ENCODE measurements at regions of chr17 and their contacts with region 1.

Region 1: DNA sequence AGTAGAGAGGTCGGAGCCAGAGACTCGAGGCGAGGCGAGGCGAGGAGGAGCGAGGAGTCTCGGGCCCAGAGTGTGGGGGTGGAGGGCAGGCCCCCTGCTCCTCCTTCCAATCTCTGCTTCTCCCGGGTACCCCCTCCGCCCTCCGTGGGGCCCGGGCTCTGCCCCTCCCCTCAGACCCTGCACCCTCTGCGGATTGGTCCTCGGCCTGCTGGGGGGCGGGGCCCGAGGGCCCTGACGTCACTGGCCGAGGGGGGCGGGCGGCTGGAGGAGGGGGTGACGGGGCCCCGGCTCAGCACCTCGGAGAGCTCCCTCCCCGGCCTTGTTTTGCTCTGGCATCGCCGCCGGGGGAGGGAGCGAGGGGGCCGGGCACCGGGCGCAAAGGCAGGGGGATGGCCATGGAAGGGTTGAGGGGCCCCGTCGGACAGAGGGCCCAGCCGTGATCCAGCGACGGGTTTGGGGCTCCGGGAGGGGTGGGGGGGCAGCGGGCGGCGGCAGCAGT is at the start of gene RUNDC3A:
- DNase-seq: peak; percentile 87
- H3K4me3 ChIP-seq: peak within 1 kb of the TSS in 1 of 3 donors; percentile 41
- H3K27ac ChIP-seq: peak within 1 kb of the TSS; percentile 36 to 74 (median 47)
- H3K4me1 ChIP-seq: peaks cover 22 to 36% of the 10 kb centered on the region in 2 donors
- H3K27me3 ChIP-seq: no peaks in the 10 kb centered on the region
- CTCF ChIP-seq: no peak
- POLR2A ChIP-seq: no peak
- total RNA-seq, gene RUNDC3A: 0.89 to 4.1 (median 2.1) TPM

Region 2: DNA sequence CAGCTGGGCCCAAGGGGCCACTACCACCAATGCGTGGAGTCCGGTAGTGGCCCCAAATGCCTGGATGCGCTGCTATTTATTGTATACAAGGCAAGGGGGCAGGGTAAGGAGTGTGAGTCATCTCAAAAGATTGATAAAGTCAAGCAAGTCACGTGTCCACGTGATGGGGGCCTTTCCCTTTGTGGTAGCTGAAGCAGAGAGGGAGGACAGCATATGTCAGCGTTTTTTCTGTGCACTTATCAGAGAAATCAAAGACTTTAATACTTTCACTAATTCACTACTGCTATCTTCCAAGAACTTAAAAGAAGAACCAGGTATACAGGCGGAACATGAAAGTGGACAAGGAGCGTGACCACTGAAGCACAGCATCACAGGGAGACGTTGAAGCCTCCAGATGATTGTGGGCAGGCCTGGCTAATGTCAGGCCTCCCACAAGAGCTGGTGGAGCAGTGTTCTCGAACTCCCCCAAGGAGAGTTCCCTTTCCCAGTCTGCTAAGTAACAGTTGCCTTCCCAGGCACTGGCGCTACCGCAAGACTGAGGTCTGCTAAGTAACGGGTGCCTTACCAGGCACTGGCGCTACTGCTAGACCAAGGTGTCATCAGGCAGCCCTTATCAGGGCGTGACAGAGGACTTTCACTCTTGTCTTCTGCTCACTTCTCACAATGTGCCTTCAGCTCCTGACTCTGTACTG is 148.7 kb before region 1 on chr17:
- intact Hi-C with region 1: no loop called
- DNase-seq: no peak
- H3K4me3 ChIP-seq: no peak overlapping the region
- H3K27ac ChIP-seq: no peak overlapping the region
- H3K4me1 ChIP-seq: no peaks in the 10 kb centered on the region
- H3K27me3 ChIP-seq: no peaks in the 10 kb centered on the region
- CTCF ChIP-seq: no peak
- POLR2A ChIP-seq: no peak

Region 3: DNA sequence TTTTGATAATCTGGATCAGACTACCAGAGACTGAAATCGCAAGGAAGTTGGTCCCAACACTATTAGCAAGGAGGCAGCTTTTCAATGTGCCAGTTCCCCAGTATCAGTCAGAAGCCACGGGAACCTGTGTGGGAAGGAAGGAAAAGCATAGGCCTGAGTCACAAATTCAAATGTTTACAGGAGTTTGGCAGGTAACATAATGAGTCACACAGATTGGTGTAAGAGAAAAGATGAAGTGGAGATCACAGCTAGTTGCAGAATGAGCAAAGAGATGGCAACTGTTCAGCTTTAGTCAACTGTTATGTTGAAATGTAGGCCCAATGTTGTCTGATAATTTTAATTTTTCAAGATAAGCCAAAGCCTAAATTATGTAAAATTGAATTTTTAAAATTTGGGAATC is 109.2 kb after region 1 on chr17:
- intact Hi-C with region 1: no loop called
- DNase-seq: no peak
- H3K4me3 ChIP-seq: no peak overlapping the region
- H3K27ac ChIP-seq: no peak overlapping the region
- H3K4me1 ChIP-seq: no peaks in the 10 kb centered on the region
- H3K27me3 ChIP-seq: no peaks in the 10 kb centered on the region
- CTCF ChIP-seq: no peak
- POLR2A ChIP-seq: no peak

Region 4: DNA sequence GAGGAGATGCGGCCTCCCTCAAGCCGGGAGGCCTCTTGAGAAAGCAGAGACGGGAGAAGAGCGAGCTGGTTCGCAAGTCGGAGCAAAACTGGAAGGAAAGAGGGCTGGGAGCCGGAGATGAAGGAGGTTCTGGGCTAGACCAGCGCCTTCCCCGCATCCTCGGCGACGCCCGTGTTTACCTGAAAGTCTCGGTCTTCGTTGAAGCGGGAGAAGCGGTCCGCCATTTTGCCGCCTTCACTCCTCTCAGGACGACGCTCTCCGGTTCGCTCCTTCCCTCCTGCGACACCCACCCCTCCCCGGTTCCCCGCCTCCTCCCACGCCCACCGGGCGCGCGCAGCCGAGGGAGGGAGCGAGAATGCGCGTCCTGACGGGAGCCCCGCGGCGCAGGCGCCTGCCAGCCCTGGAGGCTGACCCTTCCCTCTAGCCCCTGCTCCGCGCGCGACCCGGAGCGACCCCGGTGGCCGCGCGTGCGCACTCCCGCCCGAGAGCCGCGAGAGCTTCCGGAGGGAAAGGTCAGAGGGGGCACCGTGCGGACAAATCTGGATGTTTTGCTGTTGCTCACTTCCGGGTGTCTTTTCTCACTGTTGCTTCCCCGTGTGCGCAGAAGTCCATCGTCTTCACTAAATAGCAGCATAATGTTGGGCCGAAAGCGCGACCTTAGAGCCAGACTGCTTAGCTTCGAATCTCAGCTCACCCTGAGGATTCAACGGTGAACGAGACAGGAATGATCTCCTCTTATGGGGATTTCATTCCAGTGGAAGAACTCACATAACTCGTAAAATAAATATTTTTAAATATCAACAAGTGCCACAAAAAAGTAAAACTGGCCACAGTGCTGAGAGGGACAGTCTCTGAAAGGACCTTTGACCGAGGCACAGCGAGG is 195.0 kb after region 1 on chr17 and contains the start of gene GPATCH8:
- intact Hi-C with region 1: loop called (anchors 5 kb)
- DNase-seq: peak; percentile 93 to 95
- H3K4me3 ChIP-seq: peak within 1 kb of the TSS; percentile 73 to 99 (median 76)
- H3K27ac ChIP-seq: peak within 1 kb of the TSS; percentile 71 to 90 (median 87)
- H3K4me1 ChIP-seq: peaks cover 27 to 39% of the 10 kb centered on the region in 2 donors
- H3K27me3 ChIP-seq: no peaks in the 10 kb centered on the region
- CTCF ChIP-seq: peak in 1 of 6 experiments; percentile 4
- POLR2A ChIP-seq: peak in 1 of 2 donors; percentile 82
- total RNA-seq, gene GPATCH8: 52.7 to 106 (median 57.7) TPM

Measured in thyroid gland (tissue), 4 donors.